ENCODE measurements at regions of chr17 and their contacts with region 1.

Region 1: GRCh38 chr17:40474419-40475002 is 26.9 kb downstream of the TNS4 start:
- DNase-seq: no peak
- H3K4me3 Mint-ChIP-seq: no peak overlapping the region
- H3K27ac Mint-ChIP-seq: no peak overlapping the region
- H3K4me1 Mint-ChIP-seq: peaks cover 50% of the 10 kb centered on the region
- H3K27me3 Mint-ChIP-seq: peaks cover 33% of the 10 kb centered on the region

Region 2: GRCh38 chr17:40005520-40005919 is 469.0 kb before region 1 on chr17:
- CTCF ChIA-PET with region 1: no interaction called
- DNase-seq: no peak
- H3K4me3 Mint-ChIP-seq: no peak overlapping the region
- H3K27ac Mint-ChIP-seq: no peak overlapping the region
- H3K4me1 Mint-ChIP-seq: peaks cover 8% of the 10 kb centered on the region
- H3K27me3 Mint-ChIP-seq: peaks cover 7% of the 10 kb centered on the region

Region 3: GRCh38 chr17:40121181-40122135 is 353.1 kb before region 1 on chr17 and contains the start of gene MSL1:
- CTCF ChIA-PET with region 1: no interaction called
- DNase-seq: peak; percentile 89
- H3K4me3 Mint-ChIP-seq: peak within 1 kb of the TSS; percentile 83
- H3K27ac Mint-ChIP-seq: peak within 1 kb of the TSS; percentile 82
- H3K4me1 Mint-ChIP-seq: peaks cover 37% of the 10 kb centered on the region
- H3K27me3 Mint-ChIP-seq: peaks cover 3% of the 10 kb centered on the region

Region 4: GRCh38 chr17:40417609-40418427 is 56.7 kb before region 1 on chr17 and contains the start of gene TOP2A:
- CTCF ChIA-PET with region 1: interaction called, 11 read pairs
- DNase-seq: peak; percentile 97
- H3K4me3 Mint-ChIP-seq: peak within 1 kb of the TSS; percentile 90
- H3K27ac Mint-ChIP-seq: peak within 1 kb of the TSS; percentile 92
- H3K4me1 Mint-ChIP-seq: peaks cover 51% of the 10 kb centered on the region
- H3K27me3 Mint-ChIP-seq: peaks cover 3% of the 10 kb centered on the region

Region 5: DNA sequence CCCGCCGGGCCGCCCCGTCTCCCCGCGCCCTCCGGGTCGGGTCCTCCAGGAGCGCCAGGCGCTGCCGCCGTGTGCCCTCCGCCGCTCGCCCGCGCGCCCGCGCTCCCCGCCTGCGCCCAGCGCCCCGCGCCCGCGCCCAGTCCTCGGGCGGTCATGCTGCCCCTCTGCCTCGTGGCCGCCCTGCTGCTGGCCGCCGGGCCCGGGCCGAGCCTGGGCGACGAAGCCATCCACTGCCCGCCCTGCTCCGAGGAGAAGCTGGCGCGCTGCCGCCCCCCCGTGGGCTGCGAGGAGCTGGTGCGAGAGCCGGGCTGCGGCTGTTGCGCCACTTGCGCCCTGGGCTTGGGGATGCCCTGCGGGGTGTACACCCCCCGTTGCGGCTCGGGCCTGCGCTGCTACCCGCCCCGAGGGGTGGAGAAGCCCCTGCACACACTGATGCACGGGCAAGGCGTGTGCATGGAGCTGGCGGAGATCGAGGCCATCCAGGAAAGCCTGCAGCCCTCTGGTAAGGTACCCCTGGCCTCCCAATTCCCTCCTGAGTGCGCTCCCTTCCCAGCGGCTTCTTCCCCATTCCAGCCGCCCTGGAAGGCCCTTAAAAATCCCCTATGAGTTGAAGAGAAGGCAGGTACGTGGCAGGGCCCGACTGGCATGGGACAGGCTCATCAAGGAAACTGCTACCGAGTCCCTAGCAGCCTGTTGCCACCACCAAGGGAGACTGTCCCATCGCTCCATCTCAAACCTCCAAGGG is 30.8 kb before region 1 on chr17:
- CTCF ChIA-PET with region 1: interaction called, 26 read pairs
- DNase-seq: peak; percentile 81
- H3K4me3 Mint-ChIP-seq: peak overlapping the region; percentile 82
- H3K27ac Mint-ChIP-seq: peak overlapping the region; percentile 92
- H3K4me1 Mint-ChIP-seq: peaks cover 59% of the 10 kb centered on the region
- H3K27me3 Mint-ChIP-seq: peaks cover 38% of the 10 kb centered on the region

Region 6: DNA sequence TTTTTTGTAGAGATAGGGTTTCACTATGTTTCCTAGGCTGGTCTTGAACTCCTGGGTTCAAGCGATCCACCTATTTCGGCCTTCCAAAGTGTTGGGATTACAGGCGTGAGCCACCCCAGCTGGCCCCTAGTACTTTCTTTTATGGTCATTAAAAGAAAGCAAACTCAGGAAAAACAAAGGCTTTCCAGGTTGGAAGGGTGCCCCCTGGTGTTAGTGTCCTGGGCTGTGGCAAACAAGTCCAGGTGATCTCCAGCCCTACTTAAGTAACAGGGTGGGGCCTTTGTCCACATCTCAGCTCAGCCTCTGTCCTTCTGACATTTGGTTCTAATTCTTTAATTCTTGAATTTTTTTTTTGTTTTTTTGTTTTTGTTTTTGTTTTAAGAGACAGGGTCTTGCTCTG is 24.3 kb before region 1 on chr17:
- CTCF ChIA-PET with region 1: interaction called, 26 read pairs
- DNase-seq: peak; percentile 62
- H3K4me3 Mint-ChIP-seq: no peak overlapping the region
- H3K27ac Mint-ChIP-seq: no peak overlapping the region
- H3K4me1 Mint-ChIP-seq: peaks cover 45% of the 10 kb centered on the region
- H3K27me3 Mint-ChIP-seq: peaks cover 14% of the 10 kb centered on the region

Region 7: GRCh38 chr17:40464392-40464855 is 10.1 kb before region 1 on chr17:
- CTCF ChIA-PET with region 1: interaction called, 21 read pairs
- DNase-seq: no peak
- H3K4me3 Mint-ChIP-seq: no peak overlapping the region
- H3K27ac Mint-ChIP-seq: no peak overlapping the region
- H3K4me1 Mint-ChIP-seq: no peaks in the 10 kb centered on the region
- H3K27me3 Mint-ChIP-seq: peaks cover 46% of the 10 kb centered on the region

Region 8: GRCh38 chr17:40490289-40490853 is 15.9 kb after region 1 on chr17:
- CTCF ChIA-PET with region 1: interaction called, 14 read pairs
- DNase-seq: peak; percentile 70
- H3K4me3 Mint-ChIP-seq: peak overlapping the region; percentile 64
- H3K27ac Mint-ChIP-seq: peak overlapping the region; percentile 94
- H3K4me1 Mint-ChIP-seq: peaks cover 72% of the 10 kb centered on the region
- H3K27me3 Mint-ChIP-seq: no peaks in the 10 kb centered on the region

Region 9: DNA sequence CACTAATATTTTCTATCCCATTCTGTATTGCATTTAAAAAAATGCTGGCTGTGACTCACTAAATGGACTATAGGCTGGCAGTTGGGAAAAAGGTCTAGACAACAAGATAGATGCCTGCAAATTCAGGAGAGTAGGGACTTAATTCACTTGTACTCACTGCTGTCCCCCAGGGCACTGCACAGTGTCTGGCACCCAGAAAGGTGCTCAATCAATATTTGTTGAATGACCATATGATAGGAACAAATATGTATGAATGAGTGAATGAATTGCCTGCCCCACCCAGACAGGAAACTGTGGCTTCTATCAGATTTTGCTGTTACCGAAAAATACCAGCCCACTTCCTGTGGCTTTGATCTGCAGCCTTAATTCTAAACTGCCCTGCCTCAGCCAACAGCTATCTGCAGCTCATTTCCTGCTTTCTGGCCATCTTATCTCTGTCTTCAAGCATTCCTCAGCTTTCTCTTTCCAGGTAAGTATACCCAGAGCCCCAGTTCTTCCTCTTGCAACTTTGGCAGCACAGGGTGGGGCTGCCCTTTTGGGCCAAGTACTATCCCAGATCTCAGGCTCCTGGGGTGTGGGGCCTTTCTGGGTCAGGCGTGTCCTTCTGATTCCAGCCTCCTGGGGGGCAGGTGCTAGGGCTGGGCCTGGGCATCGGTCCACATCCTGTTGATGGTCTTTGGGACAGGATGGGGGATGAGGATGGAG is 42.2 kb after region 1 on chr17:
- CTCF ChIA-PET with region 1: interaction called, 20 read pairs
- DNase-seq: peak; percentile 86
- H3K4me3 Mint-ChIP-seq: peak overlapping the region; percentile 81
- H3K27ac Mint-ChIP-seq: peak overlapping the region; percentile 94
- H3K4me1 Mint-ChIP-seq: peaks cover 84% of the 10 kb centered on the region
- H3K27me3 Mint-ChIP-seq: no peaks in the 10 kb centered on the region

Region 10: GRCh38 chr17:40577611-40578065 is 103.1 kb after region 1 on chr17:
- CTCF ChIA-PET with region 1: no interaction called
- DNase-seq: peak; percentile 46
- H3K4me3 Mint-ChIP-seq: peak overlapping the region; percentile 18
- H3K27ac Mint-ChIP-seq: peak overlapping the region; percentile 79
- H3K4me1 Mint-ChIP-seq: peaks cover 69% of the 10 kb centered on the region
- H3K27me3 Mint-ChIP-seq: no peaks in the 10 kb centered on the region

Measured in activated naive CD4-positive, alpha-beta T cell treated with anti-CD3 and anti-CD28 coated beads, Interleukin-2, amount 10 ng/mL, durations not matched to agents 7 days and 5 days (primary cell).